Endothelial cell of umbilical vein (primary cell): ENCODE measurements at regions of chr13 and their contacts with region 1.

Region 1: DNA sequence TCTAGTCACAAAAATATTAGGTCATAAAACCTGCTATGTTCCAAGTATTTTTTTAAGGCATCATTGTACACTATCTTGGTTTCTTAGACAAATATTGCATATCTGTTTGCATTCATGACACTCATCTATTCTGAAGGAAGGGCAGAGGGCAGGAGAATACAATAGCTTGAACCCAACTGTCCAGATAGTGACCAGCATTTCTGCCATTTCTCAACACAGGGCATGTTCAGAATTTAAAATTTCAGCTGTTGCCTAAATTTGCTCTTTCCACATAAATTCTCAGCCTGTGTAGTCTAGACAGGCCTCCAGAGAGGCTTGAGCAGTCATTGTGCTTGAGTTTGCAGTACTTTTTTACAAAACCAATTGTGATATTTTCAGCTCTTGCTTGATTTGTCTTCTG is 119.5 kb downstream of the ZAR1L start:
- DNase-seq: no peak
- H3K4me3 ChIP-seq: no peak overlapping the region
- H3K27ac ChIP-seq: no peak overlapping the region
- H3K4me1 ChIP-seq: no peaks in the 10 kb centered on the region
- H3K27me3 ChIP-seq: no peaks in the 10 kb centered on the region
- CTCF ChIP-seq: no peak
- POLR2A ChIP-seq: no peak

Region 2: DNA sequence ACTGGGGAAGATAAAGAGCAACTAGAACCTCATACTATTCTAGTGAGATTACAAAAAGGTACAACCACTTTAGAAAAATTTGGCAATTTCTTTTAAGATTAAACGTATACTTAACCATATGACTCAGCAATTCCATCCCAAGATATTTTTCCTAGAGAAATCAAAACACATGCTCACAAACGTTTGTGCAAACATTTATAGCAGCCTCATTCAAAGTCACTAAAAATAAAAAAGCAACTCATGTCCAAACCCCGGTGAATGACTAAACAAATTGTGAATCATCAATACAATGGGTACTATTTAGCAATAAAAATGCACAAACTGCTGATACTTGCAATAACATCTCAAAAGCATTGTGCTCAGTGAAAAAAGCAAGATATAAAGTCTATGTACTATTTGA is 42.7 kb before region 1 on chr13:
- CTCF ChIA-PET with region 1: no interaction called
- POLR2A ChIA-PET with region 1: no interaction called
- dilution Hi-C with region 1: no loop called
- intact Hi-C with region 1: loop called (anchors 1 kb)
- DNase-seq: peak; percentile 64
- H3K4me3 ChIP-seq: no peak overlapping the region
- H3K27ac ChIP-seq: no peak overlapping the region
- H3K4me1 ChIP-seq: peaks cover 20% of the 10 kb centered on the region
- H3K27me3 ChIP-seq: no peaks in the 10 kb centered on the region
- CTCF ChIP-seq: no peak
- POLR2A ChIP-seq: no peak